Natural killer cell (primary cell): ENCODE measurements at regions of chr15 and their contacts with region 1.

Region 1: GRCh38 chr15:99928429-99928981 is 195.3 kb upstream of the LYSMD4 start:
- DNase-seq: peak; percentile 89 to 94
- ATAC-seq: peak; percentile 95 to 99 (median 95)
- H3K4me3 ChIP-seq: peak overlapping the region; percentile 54
- H3K4me3 Mint-ChIP-seq: peak overlapping the region; percentile 76
- H3K27ac ChIP-seq: peak overlapping the region; percentile 77
- H3K27ac Mint-ChIP-seq: peak overlapping the region in 1 of 2 donors; percentile 81
- H3K4me1 ChIP-seq: peaks cover 15% of the 10 kb centered on the region
- H3K4me1 Mint-ChIP-seq: peaks cover 7 to 14% of the 10 kb centered on the region in 2 donors
- H3K27me3 ChIP-seq: peaks cover 4% of the 10 kb centered on the region
- H3K27me3 Mint-ChIP-seq: peaks cover 6 to 16% of the 10 kb centered on the region in 2 donors
- CTCF ChIP-seq: peak; percentile 69

Region 2: GRCh38 chr15:100341662-100342560 is 413.4 kb after region 1 on chr15 and contains the start of gene ADAMTS17:
- intact Hi-C with region 1: loop called (anchors 2 kb)
- DNase-seq: peak; percentile 91 to 98
- ATAC-seq: peak; percentile 95 to 99 (median 95)
- H3K4me3 ChIP-seq: peak within 1 kb of the TSS; percentile 35
- H3K4me3 Mint-ChIP-seq: peak within 1 kb of the TSS; percentile 67
- H3K27ac ChIP-seq: no peak within 1 kb of the TSS
- H3K27ac Mint-ChIP-seq: peak within 1 kb of the TSS in 1 of 2 donors; percentile 58
- H3K4me1 ChIP-seq: peaks cover 21% of the 10 kb centered on the region
- H3K4me1 Mint-ChIP-seq: peaks cover 11 to 13% of the 10 kb centered on the region in 2 donors
- H3K27me3 ChIP-seq: peaks cover 8% of the 10 kb centered on the region
- H3K27me3 Mint-ChIP-seq: peaks cover 22 to 35% of the 10 kb centered on the region in 2 donors
- CTCF ChIP-seq: peak; percentile 93
- total RNA-seq, gene ADAMTS17: 4.8 to 9.5 (median 5.3) TPM

Region 3: DNA sequence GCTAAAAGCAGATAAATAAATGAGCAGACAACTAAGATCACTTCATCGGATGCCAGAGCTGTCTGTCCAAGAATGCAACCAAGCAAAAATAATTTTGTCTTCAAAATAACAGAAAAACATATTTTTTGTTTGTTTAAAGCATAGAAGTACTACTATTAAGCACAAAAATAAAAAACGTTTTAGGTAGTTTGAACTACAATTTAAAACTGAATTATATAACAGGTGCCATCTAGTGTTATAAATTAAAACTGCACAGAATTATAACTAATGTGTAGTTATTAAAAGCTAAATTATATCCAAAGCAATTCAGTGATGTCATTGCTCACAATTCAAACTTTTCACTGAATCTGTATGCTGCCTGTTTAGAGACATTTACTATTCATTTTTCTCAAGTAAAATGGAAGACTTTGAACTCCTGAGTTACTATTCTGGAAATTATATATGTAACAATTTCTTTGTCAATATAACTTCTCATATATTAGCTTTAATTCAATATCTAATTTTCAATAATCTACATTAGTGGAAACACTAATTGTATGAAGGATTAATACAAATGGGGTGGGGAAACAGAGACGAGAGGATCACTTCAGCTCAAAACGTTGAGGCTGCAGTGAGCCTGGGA is 644.0 kb after region 1 on chr15:
- intact Hi-C with region 1: loop called (anchors 2 kb)
- DNase-seq: peak in 1 of 2 donors; percentile 55
- ATAC-seq: no peak
- H3K4me3 ChIP-seq: no peak overlapping the region
- H3K4me3 Mint-ChIP-seq: no peak overlapping the region
- H3K27ac ChIP-seq: no peak overlapping the region
- H3K27ac Mint-ChIP-seq: no peak overlapping the region
- H3K4me1 ChIP-seq: no peaks in the 10 kb centered on the region
- H3K4me1 Mint-ChIP-seq: peaks cover 9 to 12% of the 10 kb centered on the region in 2 donors
- H3K27me3 ChIP-seq: no peaks in the 10 kb centered on the region
- H3K27me3 Mint-ChIP-seq: no peaks in the 10 kb centered on the region
- CTCF ChIP-seq: peak; percentile 70

Region 4: GRCh38 chr15:100873029-100873677 is 944.6 kb after region 1 on chr15:
- intact Hi-C with region 1: loop called (anchors 5 kb)
- DNase-seq: peak in 1 of 2 donors; percentile 78
- ATAC-seq: peak; percentile 61 to 73 (median 68)
- H3K4me3 ChIP-seq: no peak overlapping the region
- H3K4me3 Mint-ChIP-seq: no peak overlapping the region
- H3K27ac ChIP-seq: no peak overlapping the region
- H3K27ac Mint-ChIP-seq: no peak overlapping the region
- H3K4me1 ChIP-seq: no peaks in the 10 kb centered on the region
- H3K4me1 Mint-ChIP-seq: no peaks in the 10 kb centered on the region
- H3K27me3 ChIP-seq: peaks cover 2% of the 10 kb centered on the region
- H3K27me3 Mint-ChIP-seq: peaks cover 18 to 34% of the 10 kb centered on the region in 2 donors
- CTCF ChIP-seq: peak; percentile 89

Region 5: GRCh38 chr15:101008158-101009139 is 1079.9 kb after region 1 on chr15:
- intact Hi-C with region 1: loop called (anchors 5 kb)
- DNase-seq: peak; percentile 84 to 90
- ATAC-seq: peak; percentile 96 to 99 (median 98)
- H3K4me3 ChIP-seq: peak overlapping the region; percentile 82
- H3K4me3 Mint-ChIP-seq: peak overlapping the region; percentile 89
- H3K27ac ChIP-seq: no peak overlapping the region
- H3K27ac Mint-ChIP-seq: no peak overlapping the region
- H3K4me1 ChIP-seq: peaks cover 18% of the 10 kb centered on the region
- H3K4me1 Mint-ChIP-seq: peaks cover 16 to 18% of the 10 kb centered on the region in 2 donors
- H3K27me3 ChIP-seq: no peaks in the 10 kb centered on the region
- H3K27me3 Mint-ChIP-seq: peaks cover 0 to 2% of the 10 kb centered on the region in 2 donors
- CTCF ChIP-seq: peak; percentile 97